HCT116 (cell line): ENCODE measurements at regions of chr19 and their contacts with region 1.

Region 1: GRCh38 chr19:11374433-11375142 is at the start of gene SWSAP1:
- DNase-seq: peak; percentile 99
- ATAC-seq: peak; percentile 92
- H3K4me3 ChIP-seq: peak within 1 kb of the TSS; percentile 57 to 68
- H3K27ac ChIP-seq: peak within 1 kb of the TSS; percentile 88
- H3K4me1 ChIP-seq: peaks cover 43 to 48% of the 10 kb centered on the region in 2 experiments
- H3K27me3 ChIP-seq: no peaks in the 10 kb centered on the region
- CTCF ChIP-seq: no peak
- POLR2A ChIP-seq: peak; percentile 50
- RAD21 ChIP-seq: no peak
- total RNA-seq, gene SWSAP1: 2.5 TPM

Region 2: DNA sequence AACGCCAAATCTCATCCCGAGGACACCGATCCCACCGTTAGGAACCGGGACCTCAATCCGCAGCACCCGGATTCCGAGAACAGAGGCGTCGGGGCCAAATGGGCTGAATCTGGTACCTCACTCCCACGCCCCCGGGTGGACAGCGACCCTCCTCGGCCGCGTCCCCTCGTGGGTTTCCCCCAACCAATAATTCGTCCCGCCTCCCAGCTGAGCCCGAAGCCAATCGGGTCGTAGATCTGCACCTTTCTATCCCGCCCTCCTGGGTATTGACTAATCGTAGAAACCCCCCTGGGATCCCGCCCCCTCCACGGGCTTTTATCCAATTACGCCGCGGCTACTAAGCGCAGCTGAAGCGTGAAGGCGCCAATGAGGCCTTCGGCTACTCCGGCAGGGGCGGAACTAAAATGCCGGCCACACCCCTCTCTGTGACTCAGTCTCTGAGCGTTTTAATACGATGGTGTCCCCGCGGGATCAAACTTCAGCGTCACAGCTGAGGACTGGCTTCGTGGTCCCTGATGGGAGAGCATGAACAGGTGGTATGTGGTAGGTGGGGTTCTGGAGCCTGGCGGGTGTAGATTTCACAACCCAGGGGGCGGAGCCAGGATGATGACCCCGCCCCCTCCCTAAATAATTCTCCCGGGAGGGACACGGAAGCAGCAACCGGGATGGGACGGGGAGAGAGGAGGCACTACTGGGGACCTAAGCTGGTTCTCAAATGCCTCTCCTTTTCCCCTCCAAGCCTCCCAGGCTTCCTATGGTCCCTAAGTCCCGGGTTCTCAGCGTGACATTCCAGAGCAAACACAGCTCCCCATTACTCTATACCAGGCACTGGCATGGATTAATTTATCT is 28.3 kb before region 1 on chr19 and contains the starts of genes CCDC159 and TMEM205:
- CTCF ChIA-PET with region 1: interaction called, 5 read pairs
- POLR2A ChIA-PET with region 1: interaction called, 16 read pairs
- RAD21 ChIA-PET with region 1: interaction called in 1 of 2 experiments, 3 read pairs
- intact Hi-C with region 1: no loop called
- DNase-seq: peak; percentile 100
- ATAC-seq: peak; percentile 91
- H3K4me3 ChIP-seq: peak within 1 kb of the TSS; percentile 86 to 88
- H3K27ac ChIP-seq: peak within 1 kb of the TSS; percentile 67
- H3K4me1 ChIP-seq: peaks cover 25 to 51% of the 10 kb centered on the region in 2 experiments
- H3K27me3 ChIP-seq: no peaks in the 10 kb centered on the region
- CTCF ChIP-seq: no peak
- POLR2A ChIP-seq: peak; percentile 43
- RAD21 ChIP-seq: no peak
- total RNA-seq, gene CCDC159: 7.7 TPM
- total RNA-seq, gene TMEM205: 55.9 TPM

Region 3: DNA sequence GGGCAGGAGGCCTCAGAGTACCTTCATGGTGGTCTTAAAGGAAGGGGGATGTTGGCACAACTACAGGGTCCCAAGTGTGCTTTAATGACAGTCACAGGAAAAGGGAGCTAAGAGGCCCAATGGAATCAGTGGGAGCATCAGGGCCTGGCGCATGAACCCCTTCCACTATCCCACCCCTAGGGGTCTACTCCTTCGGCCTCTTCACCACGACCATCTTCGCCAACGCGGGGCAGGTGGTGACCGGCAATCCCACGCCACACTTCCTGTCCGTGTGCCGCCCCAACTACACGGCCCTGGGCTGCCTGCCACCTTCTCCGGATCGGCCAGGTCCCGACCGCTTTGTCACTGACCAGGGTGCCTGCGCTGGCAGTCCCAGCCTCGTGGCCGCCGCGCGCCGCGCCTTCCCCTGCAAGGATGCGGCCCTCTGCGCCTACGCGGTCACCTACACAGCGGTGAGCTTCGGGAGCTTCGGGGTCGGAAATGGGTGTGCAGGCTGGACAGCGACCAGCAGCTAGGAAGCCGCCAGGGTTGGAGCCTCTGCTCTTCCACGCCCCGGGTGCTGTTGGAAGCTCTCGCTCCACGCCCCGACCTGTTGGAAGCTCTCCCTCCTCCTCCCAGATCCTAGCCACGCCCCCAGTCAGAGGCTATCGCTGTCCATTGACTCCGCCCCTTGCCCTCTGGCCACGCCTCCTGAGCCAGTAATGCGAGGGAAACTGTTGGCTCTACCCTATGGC is 13.4 kb before region 1 on chr19:
- CTCF ChIA-PET with region 1: no interaction called
- POLR2A ChIA-PET with region 1: interaction called, 11 read pairs
- RAD21 ChIA-PET with region 1: no interaction called
- intact Hi-C with region 1: no loop called
- DNase-seq: no peak
- ATAC-seq: peak; percentile 89
- H3K4me3 ChIP-seq: no peak overlapping the region
- H3K27ac ChIP-seq: peak overlapping the region; percentile 27; the same call in 1 of the 2 replicates
- H3K4me1 ChIP-seq: peaks cover 5 to 13% of the 10 kb centered on the region in 2 experiments
- H3K27me3 ChIP-seq: no peaks in the 10 kb centered on the region
- CTCF ChIP-seq: no peak
- POLR2A ChIP-seq: no peak
- RAD21 ChIP-seq: no peak

Region 4: DNA sequence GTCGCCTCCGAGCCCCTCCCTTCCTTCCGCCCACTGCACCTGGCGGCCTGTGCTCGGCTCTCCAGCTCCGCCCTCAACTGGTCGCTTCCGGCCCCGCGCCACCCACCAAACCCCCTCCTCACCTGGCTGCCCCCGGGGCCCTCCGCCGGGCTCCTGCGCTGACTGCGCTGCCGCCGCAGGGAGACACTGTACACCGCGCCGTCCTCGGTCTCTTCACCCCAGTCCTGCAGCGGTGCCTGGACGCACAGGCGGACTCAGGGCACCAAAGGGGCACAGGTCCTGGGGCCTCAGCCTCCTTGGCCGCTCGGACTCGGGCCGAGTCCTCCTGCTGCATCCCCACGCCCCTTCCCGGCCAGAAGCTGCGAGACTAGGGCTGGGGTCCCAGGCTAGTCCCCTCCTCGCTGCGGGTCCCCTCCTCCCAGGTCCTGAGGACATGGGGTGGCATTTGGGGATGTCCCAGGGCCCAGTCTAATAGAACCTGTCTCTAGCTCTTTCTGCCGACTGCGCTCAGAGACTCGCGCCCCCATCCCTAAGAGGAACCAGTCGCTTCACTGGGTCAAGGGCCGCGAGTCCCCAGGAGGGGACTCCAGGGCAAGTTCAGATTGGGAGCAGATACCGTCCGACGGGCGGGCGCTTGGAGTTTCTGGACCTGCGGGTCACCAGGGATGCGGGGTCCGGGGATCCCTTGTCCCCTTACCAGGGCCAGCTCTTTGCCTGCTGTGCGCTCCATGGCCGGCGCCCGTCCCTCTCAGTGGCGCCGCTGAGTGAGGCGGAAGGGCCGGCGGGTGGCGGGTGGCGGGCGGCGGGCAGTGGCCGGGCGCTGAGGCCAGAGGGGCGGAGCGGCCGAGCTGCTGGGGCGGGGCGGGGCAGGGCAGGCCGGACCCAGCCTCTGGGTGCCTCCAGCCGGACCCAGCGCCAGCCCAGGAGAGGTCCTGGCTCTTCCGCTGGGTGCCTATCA is 44.2 kb after region 1 on chr19 and contains the start of gene RGL3:
- CTCF ChIA-PET with region 1: interaction called, 4 read pairs
- POLR2A ChIA-PET with region 1: interaction called, 15 read pairs
- RAD21 ChIA-PET with region 1: interaction called in 1 of 2 experiments, 5 read pairs
- intact Hi-C with region 1: no loop called
- DNase-seq: no peak
- ATAC-seq: peak; percentile 84
- H3K4me3 ChIP-seq: peak within 1 kb of the TSS; percentile 93 to 99
- H3K27ac ChIP-seq: peak within 1 kb of the TSS; percentile 99
- H3K4me1 ChIP-seq: peaks cover 9 to 16% of the 10 kb centered on the region in 2 experiments
- H3K27me3 ChIP-seq: no peaks in the 10 kb centered on the region
- CTCF ChIP-seq: no peak
- POLR2A ChIP-seq: no peak
- RAD21 ChIP-seq: no peak
- total RNA-seq, gene RGL3: 99.2 TPM